K562 (cell line): ENCODE measurements at regions of chr2 and their contacts with region 1.

Region 1: GRCh38 chr2:201182650-201183364 is at the start of gene CASP10:
- DNase-seq: peak; percentile 70 to 88 (median 78)
- ATAC-seq: peak; percentile 90
- H3K4me3 ChIP-seq: peak within 1 kb of the TSS; percentile 58
- H3K27ac ChIP-seq: peak within 1 kb of the TSS; percentile 84
- H3K4me1 ChIP-seq: peaks cover 5 to 14% of the 10 kb centered on the region in 2 experiments; a peak in 3 of 5 replicates
- H3K27me3 ChIP-seq: no peaks in the 10 kb centered on the region
- CTCF ChIP-seq: peak; percentile 48 to 81 (median 65)
- EP300 ChIP-seq: peak; percentile 58; the same call in 1 of the 2 replicates
- POLR2A ChIP-seq: peak; percentile 82
- RAD21 ChIP-seq: peak; percentile 59 to 84
- polyA plus RNA-seq, gene CASP10: 7.1 to 7.2 TPM

Region 2: DNA sequence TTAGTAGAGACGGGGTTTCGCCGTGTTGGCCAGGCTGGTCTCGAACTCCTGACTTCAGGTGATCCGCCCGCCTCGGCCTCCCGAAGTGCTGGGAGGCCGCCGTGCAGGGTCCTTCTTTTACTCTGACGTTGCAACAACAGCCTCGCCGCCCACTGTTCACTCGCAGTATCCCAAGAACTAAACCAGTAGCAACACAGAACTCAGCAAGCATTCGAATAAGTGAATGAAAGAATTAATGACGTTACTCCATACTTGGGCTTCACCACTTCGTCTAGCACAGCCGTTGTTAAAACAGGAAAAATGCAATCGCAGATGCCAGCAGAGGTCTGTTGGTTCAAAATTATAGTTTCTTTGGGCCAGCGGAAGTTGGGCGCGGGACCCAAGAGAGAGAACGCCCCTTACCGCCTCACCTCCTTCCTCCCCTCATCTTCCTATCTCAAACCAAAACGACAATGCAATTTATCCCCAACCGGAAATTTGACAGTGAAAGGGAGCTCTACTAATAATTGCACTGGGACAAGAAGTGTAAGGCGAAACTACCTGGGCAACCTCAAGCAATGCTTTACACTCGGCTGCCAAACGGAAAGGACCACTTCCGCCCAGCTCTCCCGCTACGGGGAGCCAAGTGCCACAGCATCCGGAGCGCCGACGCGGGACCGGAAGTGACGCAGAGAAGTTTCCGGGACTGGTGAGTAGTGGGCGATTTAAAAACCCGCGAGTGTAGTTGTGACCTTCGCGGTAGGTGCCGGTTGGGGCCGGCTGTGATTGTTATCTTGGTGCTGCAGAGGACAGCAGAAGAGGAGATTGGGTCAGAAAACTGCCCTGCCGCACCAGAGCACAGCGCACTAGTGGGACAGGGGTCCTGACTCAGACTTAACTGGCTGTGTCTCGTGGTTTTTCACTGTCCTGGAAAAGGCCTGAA is 293.8 kb before region 1 on chr2 and contains the starts of genes NIF3L1 and PPIL3:
- CTCF ChIA-PET with region 1: no interaction called
- POLR2A ChIA-PET with region 1: interaction called, 10 read pairs
- in situ Hi-C with region 1: no loop called
- intact Hi-C with region 1: no loop called
- DNase-seq: peak; percentile 80 to 98 (median 84)
- ATAC-seq: peak; percentile 89
- H3K4me3 ChIP-seq: peak within 1 kb of the TSS; percentile 46
- H3K27ac ChIP-seq: peak within 1 kb of the TSS; percentile 99
- H3K4me1 ChIP-seq: peaks cover 4 to 16% of the 10 kb centered on the region in 2 experiments; a peak in 4 of 5 replicates
- H3K27me3 ChIP-seq: no peaks in the 10 kb centered on the region
- CTCF ChIP-seq: no peak
- EP300 ChIP-seq: peak; percentile 49
- POLR2A ChIP-seq: peak; percentile 90
- RAD21 ChIP-seq: no peak; a peak in 1 of 4 replicates
- polyA plus RNA-seq, gene NIF3L1: 79.3 to 80.0 TPM
- polyA plus RNA-seq, gene PPIL3: 59.4 to 64.6 TPM

Region 3: DNA sequence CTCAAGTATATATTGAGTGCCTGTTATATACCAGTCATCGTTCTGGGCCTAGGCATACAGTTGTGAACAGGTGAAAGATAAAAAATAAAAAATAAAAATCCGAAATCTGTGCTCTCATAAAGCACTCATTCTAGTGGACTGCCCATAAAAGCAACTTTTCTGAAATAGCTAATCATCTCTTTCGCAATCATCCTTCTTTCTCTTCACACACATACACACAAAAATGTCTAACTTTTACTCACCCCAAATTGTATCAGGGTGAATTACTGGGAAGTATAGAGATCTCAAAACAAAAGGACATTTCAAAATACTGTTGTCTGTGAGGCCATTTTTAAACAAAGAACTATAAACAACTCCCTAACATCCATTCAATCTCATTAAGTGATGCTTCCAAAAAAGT is 189.7 kb before region 1 on chr2:
- CTCF ChIA-PET with region 1: no interaction called
- POLR2A ChIA-PET with region 1: no interaction called
- in situ Hi-C with region 1: no loop called
- intact Hi-C with region 1: no loop called
- DNase-seq: no peak
- ATAC-seq: no peak
- H3K4me3 ChIP-seq: no peak overlapping the region
- H3K27ac ChIP-seq: no peak overlapping the region
- H3K4me1 ChIP-seq: no peaks in the 10 kb centered on the region
- H3K27me3 ChIP-seq: no peaks in the 10 kb centered on the region
- CTCF ChIP-seq: no peak
- EP300 ChIP-seq: no peak
- POLR2A ChIP-seq: no peak
- RAD21 ChIP-seq: no peak

Region 4: DNA sequence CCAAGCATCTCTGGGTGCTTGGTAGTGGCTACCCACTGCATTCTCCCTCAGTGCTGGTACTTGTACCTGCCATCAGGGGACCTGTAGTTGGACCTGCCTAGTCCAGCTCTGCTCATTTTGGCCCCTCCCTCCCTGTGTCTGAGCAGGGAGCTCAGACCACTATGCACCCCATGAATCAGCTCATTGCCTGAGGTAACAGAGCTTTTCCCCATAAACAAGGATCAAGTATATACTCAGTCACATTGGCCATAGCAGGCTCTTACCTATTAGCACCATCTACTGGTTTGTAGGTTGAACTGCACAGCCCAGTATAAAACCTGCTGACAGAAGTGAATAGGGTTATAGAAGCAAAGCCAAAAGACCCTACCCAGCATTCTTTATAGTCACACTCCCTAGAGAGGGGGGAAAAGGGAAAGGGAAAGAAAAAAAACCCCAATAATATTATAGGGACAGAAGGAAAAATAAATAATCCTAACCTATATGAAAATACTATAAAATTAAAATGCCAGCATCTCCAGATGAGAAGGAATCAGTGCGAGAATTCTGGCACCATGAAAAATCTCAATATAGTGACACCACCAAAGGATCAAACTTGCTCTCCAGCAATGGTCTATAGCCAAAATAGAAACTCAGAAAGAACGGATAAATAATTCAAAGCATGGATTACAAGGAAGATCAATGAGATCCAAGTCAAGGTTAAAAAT is 181.2 kb after region 1 on chr2:
- CTCF ChIA-PET with region 1: no interaction called
- POLR2A ChIA-PET with region 1: no interaction called
- in situ Hi-C with region 1: no loop called
- intact Hi-C with region 1: loop called (anchors 5 kb)
- DNase-seq: peak; percentile 12 to 48 (median 18)
- ATAC-seq: peak; percentile 90
- H3K4me3 ChIP-seq: no peak overlapping the region
- H3K27ac ChIP-seq: no peak overlapping the region
- H3K4me1 ChIP-seq: no peaks in the 10 kb centered on the region
- H3K27me3 ChIP-seq: no peaks in the 10 kb centered on the region
- CTCF ChIP-seq: peak; percentile 61 to 77 (median 70)
- EP300 ChIP-seq: no peak
- POLR2A ChIP-seq: no peak
- RAD21 ChIP-seq: peak; percentile 45 to 77

Region 5: GRCh38 chr2:201558665-201559064 is 375.9 kb after region 1 on chr2:
- CTCF ChIA-PET with region 1: no interaction called
- POLR2A ChIA-PET with region 1: no interaction called
- in situ Hi-C with region 1: no loop called
- intact Hi-C with region 1: loop called (anchors 5 kb)
- DNase-seq: peak in 2 of 4 experiments; percentile 6 to 13
- ATAC-seq: peak; percentile 94
- H3K4me3 ChIP-seq: no peak overlapping the region
- H3K27ac ChIP-seq: no peak overlapping the region
- H3K4me1 ChIP-seq: no peaks in the 10 kb centered on the region
- H3K27me3 ChIP-seq: no peaks in the 10 kb centered on the region
- CTCF ChIP-seq: peak; percentile 47 to 69 (median 55); a peak in 5 of 6 replicates
- EP300 ChIP-seq: no peak
- POLR2A ChIP-seq: no peak
- RAD21 ChIP-seq: peak in 1 of 2 experiments; percentile 37; a peak in 2 of 4 replicates